ENCODE measurements at regions of chr1 and their contacts with region 1.

Region 1: GRCh38 chr1:246497331-246497915 is 9.7 kb downstream of the SMYD3 start:
- DNase-seq: peak in 3 of 9 experiments; percentile 28 to 84 (median 76)
- ATAC-seq: peak; percentile 69
- H3K4me3 ChIP-seq: no peak overlapping the region
- H3K4me3 Mint-ChIP-seq: no peak overlapping the region
- H3K27ac ChIP-seq: no peak overlapping the region
- H3K27ac Mint-ChIP-seq: no peak overlapping the region
- H3K4me1 ChIP-seq: peaks cover 6% of the 10 kb centered on the region
- H3K4me1 Mint-ChIP-seq: peaks cover 13% of the 10 kb centered on the region
- H3K27me3 ChIP-seq: no peaks in the 10 kb centered on the region
- H3K27me3 Mint-ChIP-seq: no peaks in the 10 kb centered on the region
- CTCF ChIP-seq: peak; percentile 69

Region 2: DNA sequence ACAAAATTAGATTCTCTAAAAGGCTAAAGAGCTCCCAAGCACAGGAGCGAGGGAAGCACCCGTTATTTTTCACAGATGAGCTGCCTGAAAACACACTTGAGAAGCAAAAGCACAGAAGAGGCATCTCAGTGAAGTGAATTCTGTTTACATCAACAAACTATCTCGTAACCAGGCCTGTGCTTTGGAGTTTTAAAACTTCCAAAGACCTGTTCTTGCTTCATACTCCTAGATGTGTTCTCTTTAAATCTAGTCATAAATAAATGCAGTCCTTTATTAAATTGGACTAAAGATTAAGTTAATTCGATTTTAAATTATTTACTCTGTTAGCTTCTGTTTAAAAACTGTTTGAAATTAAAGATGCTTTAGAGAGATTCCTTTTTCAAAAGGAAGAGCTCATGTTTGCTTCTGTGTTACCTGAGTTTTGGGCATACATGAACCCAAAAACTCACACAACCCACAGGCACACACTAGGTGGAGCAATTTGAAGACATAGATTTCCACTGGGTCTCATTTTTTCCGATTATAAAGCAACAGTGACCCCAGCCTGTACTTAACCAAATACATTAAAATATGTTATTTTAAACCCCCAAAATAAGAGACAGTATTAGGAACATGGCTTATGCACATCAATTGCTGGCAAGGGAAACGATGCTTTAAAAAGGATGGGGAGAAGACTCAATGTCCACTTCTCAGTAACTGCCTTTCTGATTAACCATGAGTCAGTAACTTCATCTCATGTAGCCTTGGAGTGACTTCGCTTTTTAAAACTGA is 638.5 kb before region 1 on chr1:
- CTCF ChIA-PET with region 1: no interaction called
- POLR2A ChIA-PET with region 1: no interaction called
- intact Hi-C with region 1: no loop called
- DNase-seq: no peak
- ATAC-seq: no peak
- H3K4me3 ChIP-seq: no peak overlapping the region
- H3K4me3 Mint-ChIP-seq: no peak overlapping the region
- H3K27ac ChIP-seq: no peak overlapping the region
- H3K27ac Mint-ChIP-seq: no peak overlapping the region
- H3K4me1 ChIP-seq: no peaks in the 10 kb centered on the region
- H3K4me1 Mint-ChIP-seq: no peaks in the 10 kb centered on the region
- H3K27me3 ChIP-seq: no peaks in the 10 kb centered on the region
- H3K27me3 Mint-ChIP-seq: no peaks in the 10 kb centered on the region
- CTCF ChIP-seq: no peak

Region 3: GRCh38 chr1:246117066-246117791 is 380.2 kb before region 1 on chr1:
- CTCF ChIA-PET with region 1: no interaction called
- POLR2A ChIA-PET with region 1: no interaction called
- intact Hi-C with region 1: no loop called
- DNase-seq: peak; percentile 9 to 77 (median 42)
- ATAC-seq: peak; percentile 91
- H3K4me3 ChIP-seq: no peak overlapping the region
- H3K4me3 Mint-ChIP-seq: peak overlapping the region; percentile 56
- H3K27ac ChIP-seq: peak overlapping the region in 1 of 2 experiments; percentile 41
- H3K27ac Mint-ChIP-seq: peak overlapping the region; percentile 82
- H3K4me1 ChIP-seq: peaks cover 14% of the 10 kb centered on the region
- H3K4me1 Mint-ChIP-seq: peaks cover 32% of the 10 kb centered on the region
- H3K27me3 ChIP-seq: no peaks in the 10 kb centered on the region
- H3K27me3 Mint-ChIP-seq: no peaks in the 10 kb centered on the region
- CTCF ChIP-seq: peak; percentile 52

Region 4: GRCh38 chr1:246559310-246559709 is 61.9 kb after region 1 on chr1:
- CTCF ChIA-PET with region 1: no interaction called
- POLR2A ChIA-PET with region 1: no interaction called
- intact Hi-C with region 1: loop called in 1 of 2 experiments (anchors 1 kb)
- DNase-seq: no peak
- ATAC-seq: no peak
- H3K4me3 ChIP-seq: no peak overlapping the region
- H3K4me3 Mint-ChIP-seq: no peak overlapping the region
- H3K27ac ChIP-seq: no peak overlapping the region
- H3K27ac Mint-ChIP-seq: peak overlapping the region; percentile 25
- H3K4me1 ChIP-seq: peaks cover 6% of the 10 kb centered on the region
- H3K4me1 Mint-ChIP-seq: peaks cover 30% of the 10 kb centered on the region
- H3K27me3 ChIP-seq: no peaks in the 10 kb centered on the region
- H3K27me3 Mint-ChIP-seq: no peaks in the 10 kb centered on the region
- CTCF ChIP-seq: no peak

Region 5: DNA sequence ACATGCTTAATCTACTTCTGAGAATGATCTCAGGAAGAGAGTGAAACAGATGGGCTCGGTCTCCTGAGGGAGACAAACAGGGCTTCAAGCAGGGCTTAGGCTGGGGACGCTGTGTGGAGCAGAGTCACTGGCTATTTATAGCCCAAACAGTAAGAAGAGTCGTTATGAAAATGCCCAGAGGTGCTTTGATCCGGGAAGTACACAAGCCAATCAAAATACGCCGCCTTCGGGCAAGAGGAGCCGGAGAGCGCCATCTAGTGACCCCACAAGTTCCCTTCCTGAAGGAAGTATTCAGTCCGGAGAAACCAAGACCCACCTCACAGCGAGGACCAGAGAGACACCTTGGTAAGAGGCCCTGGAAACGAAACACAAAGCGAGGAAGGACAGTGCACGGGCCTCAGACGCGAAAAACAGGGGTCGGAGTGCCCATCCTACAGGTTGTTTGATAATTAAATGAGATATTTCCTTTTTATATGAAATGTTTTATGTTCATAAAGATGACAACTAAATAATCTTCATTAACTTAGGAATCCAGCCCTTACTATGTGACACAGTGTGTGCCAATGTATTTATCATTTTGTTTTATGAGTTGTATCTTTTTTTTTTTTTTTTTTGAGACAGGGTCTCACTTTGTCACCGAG is 201.8 kb after region 1 on chr1:
- CTCF ChIA-PET with region 1: interaction called, 14 read pairs
- POLR2A ChIA-PET with region 1: no interaction called
- intact Hi-C with region 1: loop called (anchors 1 kb)
- DNase-seq: peak; percentile 53 to 90 (median 76)
- ATAC-seq: peak; percentile 89
- H3K4me3 ChIP-seq: peak overlapping the region; percentile 11 to 38
- H3K4me3 Mint-ChIP-seq: peak overlapping the region; percentile 76
- H3K27ac ChIP-seq: peak overlapping the region in 1 of 2 experiments; percentile 43
- H3K27ac Mint-ChIP-seq: no peak overlapping the region
- H3K4me1 ChIP-seq: peaks cover 2% of the 10 kb centered on the region
- H3K4me1 Mint-ChIP-seq: peaks cover 4% of the 10 kb centered on the region
- H3K27me3 ChIP-seq: no peaks in the 10 kb centered on the region
- H3K27me3 Mint-ChIP-seq: peaks cover 2% of the 10 kb centered on the region
- CTCF ChIP-seq: peak; percentile 66

Region 6: GRCh38 chr1:246753670-246754535 is 256.5 kb after region 1 on chr1:
- CTCF ChIA-PET with region 1: interaction called, 9 read pairs
- POLR2A ChIA-PET with region 1: no interaction called
- intact Hi-C with region 1: loop called in 1 of 2 experiments (anchors 1 kb)
- DNase-seq: peak; percentile 36 to 75 (median 62)
- ATAC-seq: peak; percentile 82
- H3K4me3 ChIP-seq: no peak overlapping the region
- H3K4me3 Mint-ChIP-seq: no peak overlapping the region
- H3K27ac ChIP-seq: no peak overlapping the region
- H3K27ac Mint-ChIP-seq: no peak overlapping the region
- H3K4me1 ChIP-seq: no peaks in the 10 kb centered on the region
- H3K4me1 Mint-ChIP-seq: no peaks in the 10 kb centered on the region
- H3K27me3 ChIP-seq: no peaks in the 10 kb centered on the region
- H3K27me3 Mint-ChIP-seq: no peaks in the 10 kb centered on the region
- CTCF ChIP-seq: peak; percentile 61

Region 7: DNA sequence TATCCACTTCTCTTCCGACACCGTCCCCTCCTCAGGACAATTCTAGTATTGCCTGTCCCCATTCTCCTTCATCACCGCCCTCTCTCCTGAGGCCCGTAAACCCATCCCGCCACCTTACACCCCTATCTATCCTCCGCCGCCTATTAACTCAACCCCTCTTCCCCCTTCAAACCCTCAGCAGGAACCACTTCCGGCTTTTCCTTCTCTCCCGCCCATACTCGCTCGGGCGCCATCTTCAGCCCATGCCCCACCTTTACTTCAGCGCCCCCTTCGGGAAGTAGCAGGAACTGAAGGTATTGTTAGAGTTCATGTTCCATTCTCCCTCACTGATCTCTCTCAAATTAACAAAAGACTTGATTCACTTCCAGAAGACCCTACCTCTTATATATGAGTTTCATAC is 790.0 kb after region 1 on chr1:
- CTCF ChIA-PET with region 1: no interaction called
- POLR2A ChIA-PET with region 1: no interaction called
- intact Hi-C with region 1: no loop called
- DNase-seq: peak in 1 of 9 experiments; percentile 43
- ATAC-seq: no peak
- H3K4me3 ChIP-seq: no peak overlapping the region
- H3K4me3 Mint-ChIP-seq: no peak overlapping the region
- H3K27ac ChIP-seq: no peak overlapping the region
- H3K27ac Mint-ChIP-seq: no peak overlapping the region
- H3K4me1 ChIP-seq: no peaks in the 10 kb centered on the region
- H3K4me1 Mint-ChIP-seq: peaks cover 10% of the 10 kb centered on the region
- H3K27me3 ChIP-seq: no peaks in the 10 kb centered on the region
- H3K27me3 Mint-ChIP-seq: no peaks in the 10 kb centered on the region
- CTCF ChIP-seq: no peak